Natural killer cell (primary cell): ENCODE measurements at regions of chr17 and their contacts with region 1.

Region 1: DNA sequence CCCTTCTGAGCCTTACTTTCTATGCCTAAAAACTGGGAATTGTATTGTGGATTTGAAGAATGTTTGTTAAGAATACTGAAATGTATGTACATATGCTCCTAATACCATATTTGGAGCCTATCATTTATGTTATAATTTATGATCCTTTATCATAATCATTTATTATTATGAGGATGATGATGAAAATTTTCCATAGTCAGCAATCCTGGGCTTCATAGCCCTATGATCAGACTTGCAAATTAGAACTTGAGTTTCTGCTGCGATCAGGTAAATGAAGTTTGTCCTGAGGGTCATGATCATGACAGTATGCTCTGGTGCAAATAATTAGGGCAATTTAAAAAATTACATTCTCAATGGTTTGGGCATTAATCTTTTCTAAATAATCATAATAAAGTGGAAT is 147.4 kb downstream of the CA10 start:
- DNase-seq: no peak
- ATAC-seq: no peak
- H3K4me3 ChIP-seq: no peak overlapping the region
- H3K4me3 Mint-ChIP-seq: no peak overlapping the region
- H3K27ac ChIP-seq: no peak overlapping the region
- H3K27ac Mint-ChIP-seq: no peak overlapping the region
- H3K4me1 ChIP-seq: no peaks in the 10 kb centered on the region
- H3K4me1 Mint-ChIP-seq: no peaks in the 10 kb centered on the region
- H3K27me3 ChIP-seq: no peaks in the 10 kb centered on the region
- H3K27me3 Mint-ChIP-seq: no peaks in the 10 kb centered on the region
- CTCF ChIP-seq: no peak

Region 2: DNA sequence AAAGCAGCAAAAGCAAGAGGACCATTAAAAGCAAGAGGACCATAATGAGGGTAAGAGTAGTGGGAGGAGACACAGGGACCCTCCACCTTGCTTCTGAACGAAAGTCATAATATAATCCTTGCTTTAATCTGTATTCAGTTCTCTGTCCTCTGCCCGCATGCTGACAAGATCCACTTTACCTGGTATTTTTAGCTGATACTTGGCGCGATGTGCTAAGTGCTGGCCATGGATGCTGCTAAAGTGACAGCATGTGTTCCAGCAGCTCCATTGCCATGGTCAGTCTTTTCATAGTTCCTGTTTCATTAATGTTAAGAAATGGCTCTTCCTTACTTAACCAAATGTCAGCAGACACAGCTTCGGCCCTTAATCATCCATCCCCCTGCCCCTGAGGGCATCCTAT is 60.6 kb after region 1 on chr17:
- intact Hi-C with region 1: loop called (anchors 10 kb)
- DNase-seq: no peak
- ATAC-seq: no peak
- H3K4me3 ChIP-seq: no peak overlapping the region
- H3K4me3 Mint-ChIP-seq: no peak overlapping the region
- H3K27ac ChIP-seq: no peak overlapping the region
- H3K27ac Mint-ChIP-seq: no peak overlapping the region
- H3K4me1 ChIP-seq: no peaks in the 10 kb centered on the region
- H3K4me1 Mint-ChIP-seq: no peaks in the 10 kb centered on the region
- H3K27me3 ChIP-seq: no peaks in the 10 kb centered on the region
- H3K27me3 Mint-ChIP-seq: no peaks in the 10 kb centered on the region
- CTCF ChIP-seq: no peak

Region 3: DNA sequence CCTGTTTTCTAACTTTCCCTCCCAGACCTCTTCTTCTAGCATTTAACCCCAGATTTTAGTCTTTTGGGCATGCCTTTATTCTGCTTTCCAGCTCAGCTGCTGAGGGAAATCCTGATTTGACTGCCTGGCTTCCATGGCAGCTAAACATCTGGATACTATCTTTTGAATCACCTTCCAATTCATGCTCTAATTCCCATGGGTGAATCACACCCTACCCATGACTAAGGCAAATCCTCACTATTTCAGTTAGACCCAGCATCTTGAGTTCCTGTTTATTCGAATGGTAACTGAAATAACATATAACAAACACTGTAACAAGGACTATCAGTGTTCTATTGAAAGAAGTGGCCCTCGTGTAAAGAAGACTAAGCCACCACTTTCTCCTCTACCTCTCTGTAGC is 117.7 kb after region 1 on chr17:
- intact Hi-C with region 1: no loop called
- DNase-seq: no peak
- ATAC-seq: no peak
- H3K4me3 ChIP-seq: no peak overlapping the region
- H3K4me3 Mint-ChIP-seq: no peak overlapping the region
- H3K27ac ChIP-seq: no peak overlapping the region
- H3K27ac Mint-ChIP-seq: no peak overlapping the region
- H3K4me1 ChIP-seq: no peaks in the 10 kb centered on the region
- H3K4me1 Mint-ChIP-seq: no peaks in the 10 kb centered on the region
- H3K27me3 ChIP-seq: no peaks in the 10 kb centered on the region
- H3K27me3 Mint-ChIP-seq: no peaks in the 10 kb centered on the region
- CTCF ChIP-seq: no peak